Adrenal gland (tissue), 19 donors: ENCODE measurements at regions of chr16 and their contacts with region 1.

Region 1: DNA sequence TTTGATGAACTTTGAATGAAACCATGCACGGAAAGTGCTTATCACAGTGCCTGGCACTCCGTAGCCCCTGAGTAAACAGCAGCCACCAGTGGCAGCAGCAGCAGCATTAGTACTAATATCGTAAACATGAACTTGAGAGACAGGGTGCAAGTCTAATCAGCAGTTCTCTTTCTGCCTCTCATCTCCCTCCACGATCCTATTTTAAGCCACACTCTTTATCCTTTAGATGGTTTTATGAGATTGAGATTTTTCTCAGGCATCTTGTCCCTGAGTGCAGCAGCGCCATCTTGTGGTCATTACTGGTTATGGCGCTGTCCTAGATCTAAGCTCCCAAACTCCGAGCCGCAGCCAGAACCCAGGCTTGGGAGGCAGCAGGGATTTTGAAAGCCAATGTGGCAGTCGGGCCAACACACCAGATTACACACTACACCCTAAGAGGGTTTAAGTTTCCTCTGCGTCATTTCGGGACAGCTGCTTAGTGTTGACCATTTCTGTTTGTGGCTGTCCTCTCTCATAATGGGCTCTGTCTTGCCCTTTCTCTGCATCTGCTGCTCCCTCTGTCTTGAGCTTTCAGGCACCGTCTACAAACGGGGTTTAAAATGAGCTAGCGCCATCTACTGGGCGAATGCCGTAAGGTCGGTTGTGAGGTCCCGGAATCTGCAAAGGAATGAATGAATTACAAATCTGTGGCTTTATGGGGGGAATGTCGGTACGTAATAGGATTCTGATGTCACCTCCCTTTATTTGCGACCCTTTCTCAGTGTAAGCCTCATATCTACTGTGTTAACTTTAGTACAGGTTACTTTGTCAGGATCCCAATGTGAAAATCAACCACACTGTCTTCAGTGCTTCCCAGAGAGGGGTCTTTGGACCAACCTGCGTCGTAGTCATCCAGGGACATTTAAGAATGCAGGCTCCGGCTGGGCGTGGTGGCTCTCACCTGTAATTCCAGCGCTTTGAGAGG is 64.5 kb downstream of the CYLD start:
- DNase-seq: peak; percentile 82 to 93 (median 89)
- H3K4me3 ChIP-seq: peak overlapping the region in 1 of 4 donors; percentile 46
- H3K27ac ChIP-seq: peak overlapping the region in 1 of 5 donors; percentile 76
- H3K4me1 ChIP-seq: peaks cover 0 to 4% of the 10 kb centered on the region in 2 donors
- H3K27me3 ChIP-seq: no peaks in the 10 kb centered on the region
- CTCF ChIP-seq: peak; percentile 83 to 98 (median 96)
- POLR2A ChIP-seq: no peak

Region 2: DNA sequence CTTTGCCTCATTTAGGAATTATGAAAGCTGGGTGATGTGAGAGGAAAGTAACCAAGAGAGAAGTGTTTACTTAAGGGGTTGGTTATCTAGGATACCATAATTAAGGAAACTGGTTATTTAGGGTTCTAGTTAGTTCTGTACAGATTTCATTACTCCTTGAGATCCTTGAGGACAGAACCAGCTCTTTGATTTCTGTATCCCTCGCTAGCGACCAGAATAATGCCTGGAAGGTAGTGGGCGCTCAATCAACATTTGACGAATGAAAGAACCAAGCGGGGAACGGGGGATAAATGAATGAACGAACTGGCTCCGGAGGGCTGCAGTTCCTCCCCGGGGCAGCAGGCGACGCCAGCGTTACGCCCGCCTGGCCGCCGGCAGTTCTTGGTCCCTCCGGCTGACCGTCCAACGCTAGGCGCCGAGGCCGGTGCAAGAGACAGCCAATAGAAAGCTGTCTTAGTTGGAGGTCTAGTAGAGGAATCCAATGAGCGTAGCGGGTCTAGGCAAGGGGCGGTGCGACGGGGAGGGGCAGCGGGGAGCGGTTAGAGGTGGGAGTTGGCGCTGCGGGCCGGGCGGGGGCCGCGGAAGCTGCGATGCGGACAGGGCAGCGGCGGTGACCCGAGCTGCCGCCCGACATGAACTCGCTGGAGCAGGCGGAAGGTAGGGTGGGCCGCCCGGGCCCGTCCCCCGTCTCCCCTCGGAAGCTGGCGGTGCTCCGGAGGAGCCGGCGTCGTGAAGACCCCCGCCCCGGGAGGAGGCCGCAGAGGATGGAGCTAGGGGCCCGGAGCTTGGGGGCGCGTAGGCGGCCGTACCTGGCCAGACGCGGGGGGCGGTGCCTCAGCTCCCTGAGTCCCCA is 781.5 kb before region 1 on chr16 and contains the start of gene CNEP1R1:
- intact Hi-C with region 1: loop called in 1 of 2 experiments (anchors 10 kb)
- DNase-seq: peak; percentile 93 to 98 (median 96)
- H3K4me3 ChIP-seq: peak within 1 kb of the TSS; percentile 31 to 84 (median 75)
- H3K27ac ChIP-seq: peak within 1 kb of the TSS; percentile 15 to 82 (median 77)
- H3K4me1 ChIP-seq: peaks cover 3 to 18% of the 10 kb centered on the region in 2 donors
- H3K27me3 ChIP-seq: no peaks in the 10 kb centered on the region
- CTCF ChIP-seq: peak; percentile 100
- POLR2A ChIP-seq: peak in 1 of 2 donors; percentile 41
- total RNA-seq, gene CNEP1R1: 14.7 to 25.3 (median 20.5) TPM

Region 3: DNA sequence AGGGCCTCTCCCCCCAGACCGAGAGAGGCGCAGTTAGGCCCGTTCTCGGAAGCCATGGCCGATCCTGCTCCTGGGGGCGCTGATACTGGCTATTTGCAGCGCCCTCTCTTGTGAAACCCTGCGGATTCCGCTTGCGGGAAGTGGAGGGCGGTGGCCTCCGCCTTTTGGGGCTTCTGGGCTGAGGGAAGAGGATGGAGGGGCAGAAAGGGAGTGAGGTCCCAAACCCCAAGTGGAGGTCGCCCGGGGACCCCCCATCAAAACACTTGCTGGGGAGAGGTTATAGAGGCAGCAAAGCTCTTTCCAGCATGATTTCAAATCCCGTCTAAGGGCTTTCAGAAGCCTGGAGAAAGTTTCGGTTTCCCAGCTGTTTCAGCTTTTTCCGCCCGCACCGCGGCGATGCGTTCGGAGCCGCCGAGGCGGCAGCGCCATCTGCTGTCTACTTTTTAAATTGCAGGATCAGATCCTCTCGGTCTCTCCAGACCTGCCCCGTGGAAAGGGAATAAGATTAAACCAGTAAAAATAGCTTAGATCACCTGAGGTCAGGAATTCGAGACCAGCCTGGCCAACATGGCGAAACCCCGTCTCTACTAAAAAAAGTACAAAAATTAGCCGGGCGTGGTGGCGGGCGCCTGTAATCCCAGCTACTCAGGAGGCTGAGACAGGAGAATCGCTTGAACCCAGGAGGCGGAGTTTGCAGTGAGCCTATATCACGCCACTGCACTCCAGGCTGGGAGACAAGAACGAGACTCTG is 141.1 kb before region 1 on chr16:
- intact Hi-C with region 1: loop called in 1 of 2 experiments (anchors 5 kb)
- DNase-seq: peak; percentile 72 to 91 (median 85)
- H3K4me3 ChIP-seq: peak overlapping the region in 2 of 4 donors; percentile 52 to 57
- H3K27ac ChIP-seq: peak overlapping the region in 3 of 5 donors; percentile 49 to 59 (median 54)
- H3K4me1 ChIP-seq: peaks cover 0 to 3% of the 10 kb centered on the region in 2 donors
- H3K27me3 ChIP-seq: no peaks in the 10 kb centered on the region
- CTCF ChIP-seq: peak; percentile 77 to 97 (median 88)
- POLR2A ChIP-seq: no peak

Region 4: GRCh38 chr16:50696575-50697420 is 109.6 kb before region 1 on chr16:
- intact Hi-C with region 1: loop called in 1 of 2 experiments (anchors 10 kb)
- DNase-seq: peak; percentile 55 to 89 (median 82)
- H3K4me3 ChIP-seq: no peak overlapping the region
- H3K27ac ChIP-seq: peak overlapping the region in 2 of 5 donors; percentile 15 to 59
- H3K4me1 ChIP-seq: peaks cover 12 to 32% of the 10 kb centered on the region in 2 donors
- H3K27me3 ChIP-seq: no peaks in the 10 kb centered on the region
- CTCF ChIP-seq: no peak
- POLR2A ChIP-seq: no peak